Calu3 (cell line): ENCODE measurements at regions of chr3 and their contacts with region 1.

Region 1: DNA sequence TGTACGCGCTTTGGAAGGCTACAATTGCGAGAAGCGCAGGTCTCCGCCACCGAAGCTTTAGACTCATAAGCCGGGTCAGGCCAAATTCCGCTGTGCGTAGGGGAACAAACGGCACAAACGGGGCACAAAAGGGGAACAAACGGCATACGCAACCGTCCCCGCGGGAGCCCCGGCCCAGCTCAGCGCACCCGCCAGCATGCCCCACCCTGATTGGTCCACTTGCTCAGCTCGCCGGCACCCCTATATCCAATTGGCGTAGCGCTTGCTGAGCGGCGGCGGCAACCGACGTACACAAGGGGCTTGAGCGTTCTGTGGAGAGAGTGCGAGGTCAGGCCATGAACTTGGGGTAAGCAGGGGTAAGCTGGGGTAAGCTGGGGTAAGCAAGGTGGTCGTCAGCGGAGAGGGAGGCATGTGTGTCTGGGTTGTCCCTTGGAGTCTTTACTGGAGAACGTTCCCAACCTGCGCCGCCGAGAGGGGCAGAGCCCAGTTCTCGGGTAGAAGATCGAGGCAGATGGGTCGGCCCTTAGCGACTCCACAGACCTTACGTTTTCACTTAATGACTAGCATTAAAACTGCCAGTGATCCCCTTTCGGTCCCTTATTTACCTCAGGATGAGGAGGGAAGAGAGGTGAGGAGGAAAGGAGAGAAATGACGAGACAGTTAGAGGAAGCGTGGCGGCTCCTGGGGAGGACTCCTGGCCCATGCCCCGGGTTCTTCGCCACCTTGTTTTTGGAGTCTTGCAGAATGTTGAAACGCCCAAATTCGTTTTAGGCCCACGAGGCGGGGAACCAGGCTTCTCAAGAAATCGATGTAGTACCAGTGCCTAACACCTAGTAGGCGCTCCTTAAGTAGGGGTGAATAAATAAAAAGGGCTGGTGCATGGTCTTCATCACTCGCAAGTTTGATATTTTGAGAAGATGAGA is at the start of gene CCDC66:
- DNase-seq: peak; percentile 94
- H3K4me3 Mint-ChIP-seq: peak within 1 kb of the TSS; percentile 97
- H3K27ac Mint-ChIP-seq: peak within 1 kb of the TSS; percentile 92
- H3K4me1 Mint-ChIP-seq: peaks cover 9% of the 10 kb centered on the region
- H3K27me3 Mint-ChIP-seq: peaks cover 36% of the 10 kb centered on the region
- CTCF ChIP-seq: peak; percentile 46
- total RNA-seq, gene CCDC66: 30.6 and 35.7 TPM in 2 replicates

Region 2: DNA sequence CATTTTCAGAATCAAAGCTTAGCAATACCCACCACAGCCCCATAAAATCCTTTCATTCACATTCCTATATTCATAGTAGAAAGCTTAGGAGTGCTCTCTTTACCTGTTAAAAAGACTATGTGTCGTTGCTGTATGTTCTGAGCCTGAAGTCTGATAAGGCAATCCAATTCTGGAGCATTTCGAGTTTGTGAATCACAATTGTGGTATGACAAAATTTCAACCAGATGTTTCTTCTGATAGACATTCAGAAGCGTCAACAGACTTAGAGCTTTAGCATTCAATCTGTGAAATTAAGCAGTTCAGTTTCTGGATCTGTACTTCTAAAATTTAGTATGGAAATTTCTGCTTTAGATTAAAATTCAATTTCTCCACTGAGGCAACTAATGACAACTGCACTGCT is 67.6 kb after region 1 on chr3:
- CTCF ChIA-PET with region 1: no interaction called
- intact Hi-C with region 1: loop called (anchors 5 kb)
- DNase-seq: no peak
- H3K4me3 Mint-ChIP-seq: no peak overlapping the region
- H3K27ac Mint-ChIP-seq: no peak overlapping the region
- H3K4me1 Mint-ChIP-seq: peaks cover 18% of the 10 kb centered on the region
- H3K27me3 Mint-ChIP-seq: no peaks in the 10 kb centered on the region
- CTCF ChIP-seq: no peak